ENCODE measurements at regions of chr4 and their contacts with region 1.

Region 1: DNA sequence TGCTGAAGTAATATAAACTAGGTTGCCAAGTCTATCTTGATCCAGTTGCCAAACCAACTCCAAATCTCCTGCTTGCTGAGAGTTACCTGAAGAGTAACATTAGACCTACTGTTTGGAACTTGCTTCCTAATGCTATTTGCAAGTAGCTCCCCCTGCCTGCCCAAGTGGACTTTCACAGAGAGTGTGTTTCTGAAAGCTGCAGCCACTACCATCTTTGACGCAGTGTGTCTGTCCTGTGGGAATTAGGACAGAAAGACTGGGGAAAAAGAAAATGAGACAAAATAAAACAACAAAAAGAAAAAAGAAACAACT is 195.0 kb upstream of the HS3ST1 start:
- DNase-seq: peak; percentile 39 to 53
- H3K4me3 ChIP-seq: no peak overlapping the region
- H3K4me3 Mint-ChIP-seq: no peak overlapping the region
- H3K27ac Mint-ChIP-seq: no peak overlapping the region
- H3K4me1 ChIP-seq: peaks cover 25% of the 10 kb centered on the region
- H3K4me1 Mint-ChIP-seq: peaks cover 21% of the 10 kb centered on the region
- H3K27me3 ChIP-seq: no peaks in the 10 kb centered on the region
- H3K27me3 Mint-ChIP-seq: no peaks in the 10 kb centered on the region
- CTCF ChIP-seq: peak; percentile 46 to 53

Region 2: GRCh38 chr4:11487876-11488544 is 135.7 kb before region 1 on chr4:
- CTCF ChIA-PET with region 1: no interaction called
- POLR2A ChIA-PET with region 1: no interaction called
- intact Hi-C with region 1: loop called (anchors 5 kb)
- DNase-seq: no peak
- H3K4me3 ChIP-seq: no peak overlapping the region
- H3K4me3 Mint-ChIP-seq: no peak overlapping the region
- H3K27ac Mint-ChIP-seq: no peak overlapping the region
- H3K4me1 ChIP-seq: peaks cover 5% of the 10 kb centered on the region; the same call in 1 of the 2 replicates
- H3K4me1 Mint-ChIP-seq: peaks cover 10% of the 10 kb centered on the region
- H3K27me3 ChIP-seq: no peaks in the 10 kb centered on the region
- H3K27me3 Mint-ChIP-seq: no peaks in the 10 kb centered on the region
- CTCF ChIP-seq: no peak

Region 3: GRCh38 chr4:11548597-11549082 is 75.0 kb before region 1 on chr4:
- CTCF ChIA-PET with region 1: no interaction called
- POLR2A ChIA-PET with region 1: no interaction called
- intact Hi-C with region 1: no loop called
- DNase-seq: no peak
- H3K4me3 ChIP-seq: no peak overlapping the region
- H3K4me3 Mint-ChIP-seq: no peak overlapping the region
- H3K27ac Mint-ChIP-seq: no peak overlapping the region
- H3K4me1 ChIP-seq: no peaks in the 10 kb centered on the region
- H3K4me1 Mint-ChIP-seq: no peaks in the 10 kb centered on the region
- H3K27me3 ChIP-seq: no peaks in the 10 kb centered on the region
- H3K27me3 Mint-ChIP-seq: peaks cover 3% of the 10 kb centered on the region
- CTCF ChIP-seq: no peak

Region 4: DNA sequence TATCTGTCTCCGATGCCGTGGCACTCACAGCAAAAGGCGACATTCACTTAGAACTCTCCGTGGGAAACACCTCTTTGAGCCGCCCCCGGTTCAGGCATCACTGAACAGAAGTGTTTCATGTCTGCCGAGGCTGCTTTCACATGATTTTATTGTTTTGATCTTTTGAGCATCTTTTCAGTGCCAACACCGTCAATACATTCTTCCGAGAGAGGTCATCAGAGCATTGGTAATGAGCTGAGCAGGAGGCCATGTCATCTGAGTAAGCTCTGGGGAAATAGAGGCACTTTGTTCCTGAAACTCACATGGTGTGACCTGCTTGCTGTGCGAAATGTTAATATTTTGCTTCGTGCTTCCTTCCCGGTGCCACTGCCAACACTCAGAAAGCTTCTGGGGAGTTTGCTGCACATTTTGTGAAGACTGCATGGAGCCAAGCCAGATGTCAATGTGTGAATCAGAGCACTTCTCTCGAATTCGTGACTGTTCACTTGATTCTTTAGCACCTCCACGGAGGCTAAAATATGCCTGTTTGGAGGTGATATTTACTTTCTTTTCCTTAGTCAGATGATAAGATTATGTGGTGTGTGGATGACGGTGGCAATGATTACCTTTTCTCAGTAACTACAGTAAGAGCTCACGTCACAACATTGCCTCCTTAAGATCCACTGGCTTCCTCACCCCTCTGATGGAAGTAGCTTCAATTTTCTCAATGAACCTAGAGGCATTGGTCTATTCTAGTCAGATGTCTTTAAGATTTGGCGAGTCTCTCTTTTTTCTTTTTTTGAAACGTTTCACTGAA is 27.3 kb after region 1 on chr4:
- CTCF ChIA-PET with region 1: no interaction called
- POLR2A ChIA-PET with region 1: no interaction called
- intact Hi-C with region 1: no loop called
- DNase-seq: no peak
- H3K4me3 ChIP-seq: no peak overlapping the region
- H3K4me3 Mint-ChIP-seq: no peak overlapping the region
- H3K27ac Mint-ChIP-seq: no peak overlapping the region
- H3K4me1 ChIP-seq: no peaks in the 10 kb centered on the region
- H3K4me1 Mint-ChIP-seq: no peaks in the 10 kb centered on the region
- H3K27me3 ChIP-seq: no peaks in the 10 kb centered on the region
- H3K27me3 Mint-ChIP-seq: no peaks in the 10 kb centered on the region
- CTCF ChIP-seq: no peak